ENCODE measurements at regions of chr16 and their contacts with region 1.

Region 1: DNA sequence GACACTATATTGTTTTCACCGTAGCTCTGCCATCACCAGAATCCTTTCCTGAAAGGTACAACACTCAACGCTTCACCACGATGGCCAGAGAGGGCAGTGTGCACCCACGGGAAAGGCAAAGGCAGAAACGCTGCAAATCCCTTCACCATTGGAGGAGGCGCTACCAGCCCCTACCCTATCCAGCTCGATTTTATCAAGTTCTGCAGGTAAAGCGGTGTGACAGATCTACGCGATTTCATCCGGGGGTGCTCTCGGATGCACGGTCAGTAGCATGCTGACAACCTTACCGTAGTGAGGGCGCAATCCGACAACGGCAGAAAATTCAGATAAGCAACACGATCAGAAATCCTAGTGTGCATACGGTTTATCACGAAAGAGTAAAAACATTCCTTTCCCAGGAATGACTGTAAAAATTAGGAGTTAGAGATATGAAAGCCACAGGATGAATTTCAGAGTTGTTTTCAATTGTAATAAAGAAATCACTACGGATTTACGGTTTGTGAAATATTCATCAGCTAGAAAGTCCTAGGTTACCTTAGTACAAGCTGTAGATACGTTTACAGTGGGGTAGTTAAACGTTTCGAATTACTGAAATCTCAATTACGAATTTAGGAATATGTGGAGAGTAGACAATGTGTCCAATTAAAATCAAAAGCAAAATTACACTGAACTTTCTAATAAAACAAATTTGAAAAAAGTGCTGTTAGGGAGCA is 1.8 kb downstream of the NETO2 start:
- DNase-seq: peak; percentile 75 to 87
- H3K4me3 ChIP-seq: peak overlapping the region; percentile 51 to 79 (median 70)
- H3K27ac ChIP-seq: no peak overlapping the region
- H3K4me1 ChIP-seq: 0 out of 7 replicates have a peak, but pooled peaks cover 0 to 2% (median 0%) of the 10 kb centered on the region in 4 experiments
- H3K27me3 ChIP-seq: peaks cover 2 to 31% (median 19%) of the 10 kb centered on the region in 4 experiments
- CTCF ChIP-seq: peak; percentile 96 to 99 (median 97)
- EP300 ChIP-seq: no peak
- POLR2A ChIP-seq: no peak
- RAD21 ChIP-seq: peak; percentile 94 to 96

Region 2: DNA sequence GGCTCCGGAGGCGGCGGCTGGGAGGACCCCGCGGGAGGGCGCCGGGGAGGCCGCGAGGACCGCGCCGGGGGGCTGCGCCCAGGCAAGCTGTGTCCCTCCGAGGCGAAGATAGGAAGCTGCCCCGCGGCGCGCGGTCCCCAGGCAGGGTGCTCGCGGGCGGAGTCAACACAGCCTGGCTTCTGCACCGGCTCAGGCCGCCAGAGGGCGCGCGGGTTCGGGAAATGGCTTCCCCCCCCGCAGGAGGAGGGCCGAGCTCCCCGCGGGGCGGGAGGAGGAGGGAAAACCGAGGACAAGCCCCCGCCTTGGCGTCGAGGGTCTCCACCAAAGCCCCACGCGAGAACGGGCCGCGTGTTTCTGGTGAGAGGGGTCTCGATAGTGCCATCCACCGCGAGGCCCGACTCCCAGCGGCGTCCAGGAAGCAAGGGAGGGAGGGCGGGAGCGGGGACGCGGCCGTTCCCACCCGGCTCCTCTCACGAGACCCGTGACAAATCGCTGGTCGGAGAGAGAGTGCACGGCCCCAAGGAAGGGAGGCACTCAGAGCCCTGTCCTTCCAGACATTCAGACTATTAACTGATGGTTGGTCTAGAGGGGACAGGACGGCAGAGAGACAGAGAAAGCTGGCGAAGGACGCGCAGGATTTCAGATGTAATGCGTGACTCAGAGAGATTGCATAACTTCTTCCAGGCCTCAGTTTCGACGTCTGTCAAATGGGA is 104.0 kb before region 1 on chr16:
- CTCF ChIA-PET with region 1: interaction called, 16 read pairs
- POLR2A ChIA-PET with region 1: interaction called, 3 read pairs
- DNase-seq: peak in 1 of 2 experiments; percentile 98
- H3K4me3 ChIP-seq: peak overlapping the region; percentile 47 to 90 (median 67)
- H3K27ac ChIP-seq: no peak overlapping the region
- H3K4me1 ChIP-seq: no peaks in the 10 kb centered on the region
- H3K27me3 ChIP-seq: peaks cover 0 to 14% (median 5%) of the 10 kb centered on the region in 4 experiments; a peak in 4 of 7 replicates
- CTCF ChIP-seq: peak; percentile 83 to 89 (median 84)
- EP300 ChIP-seq: no peak
- POLR2A ChIP-seq: no peak
- RAD21 ChIP-seq: peak; percentile 76 to 85

Region 3: GRCh38 chr16:47110939-47111338 is 31.0 kb before region 1 on chr16:
- CTCF ChIA-PET with region 1: interaction called, 11 read pairs
- POLR2A ChIA-PET with region 1: no interaction called
- DNase-seq: no peak
- H3K4me3 ChIP-seq: no peak overlapping the region
- H3K27ac ChIP-seq: no peak overlapping the region
- H3K4me1 ChIP-seq: no peaks in the 10 kb centered on the region
- H3K27me3 ChIP-seq: no peaks in the 10 kb centered on the region
- CTCF ChIP-seq: peak in 2 of 3 experiments; percentile 32 to 50; a peak in 2 of 4 replicates
- EP300 ChIP-seq: no peak
- POLR2A ChIP-seq: no peak
- RAD21 ChIP-seq: peak; percentile 61 to 67

Region 4: GRCh38 chr16:47162670-47163420 is 20.9 kb after region 1 on chr16:
- CTCF ChIA-PET with region 1: interaction called, 19 read pairs
- POLR2A ChIA-PET with region 1: interaction called, 3 read pairs
- DNase-seq: no peak
- H3K4me3 ChIP-seq: no peak overlapping the region
- H3K27ac ChIP-seq: no peak overlapping the region
- H3K4me1 ChIP-seq: no peaks in the 10 kb centered on the region
- H3K27me3 ChIP-seq: no peaks in the 10 kb centered on the region
- CTCF ChIP-seq: peak in 2 of 3 experiments; percentile 13 to 14; a peak in 2 of 4 replicates
- EP300 ChIP-seq: no peak
- POLR2A ChIP-seq: no peak
- RAD21 ChIP-seq: peak; percentile 34

Region 5: GRCh38 chr16:47211218-47211617 is 69.3 kb after region 1 on chr16:
- CTCF ChIA-PET with region 1: no interaction called
- POLR2A ChIA-PET with region 1: no interaction called
- DNase-seq: no peak
- H3K4me3 ChIP-seq: no peak overlapping the region
- H3K27ac ChIP-seq: no peak overlapping the region
- H3K4me1 ChIP-seq: no peaks in the 10 kb centered on the region
- H3K27me3 ChIP-seq: no peaks in the 10 kb centered on the region
- CTCF ChIP-seq: no peak
- EP300 ChIP-seq: no peak
- POLR2A ChIP-seq: no peak
- RAD21 ChIP-seq: no peak

Region 6: DNA sequence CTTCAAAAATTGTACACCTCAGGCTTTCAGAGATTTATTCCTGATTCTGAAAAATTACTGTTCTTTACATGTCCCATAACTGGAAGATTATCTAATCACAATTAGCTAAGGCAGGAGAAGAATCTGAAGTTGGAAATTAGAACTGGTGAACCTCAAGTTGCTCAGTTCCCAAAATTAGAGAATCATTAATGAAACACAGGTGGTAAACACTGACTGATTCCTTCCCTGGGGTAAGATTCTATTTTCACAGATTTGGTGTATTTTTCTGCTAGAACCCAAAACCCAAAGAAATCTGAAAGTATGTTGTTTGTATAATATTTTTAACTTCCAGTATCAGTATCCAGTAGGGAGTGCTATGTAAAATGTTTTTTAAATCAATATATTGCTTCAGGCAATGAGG is 344.9 kb after region 1 on chr16:
- CTCF ChIA-PET with region 1: no interaction called
- POLR2A ChIA-PET with region 1: no interaction called
- DNase-seq: no peak
- H3K4me3 ChIP-seq: no peak overlapping the region
- H3K27ac ChIP-seq: no peak overlapping the region
- H3K4me1 ChIP-seq: peaks cover 0 to under 1% (median 0%) of the 10 kb centered on the region in 4 experiments; a peak in 1 of 7 replicates
- H3K27me3 ChIP-seq: no peaks in the 10 kb centered on the region
- CTCF ChIP-seq: no peak
- EP300 ChIP-seq: no peak
- POLR2A ChIP-seq: no peak
- RAD21 ChIP-seq: no peak

Region 7: GRCh38 chr16:48117217-48118105 is 975.5 kb after region 1 on chr16:
- CTCF ChIA-PET with region 1: interaction called, 13 read pairs
- POLR2A ChIA-PET with region 1: no interaction called
- DNase-seq: peak; percentile 71 to 97
- H3K4me3 ChIP-seq: no peak overlapping the region
- H3K27ac ChIP-seq: no peak overlapping the region
- H3K4me1 ChIP-seq: no peaks in the 10 kb centered on the region
- H3K27me3 ChIP-seq: no peaks in the 10 kb centered on the region
- CTCF ChIP-seq: peak; percentile 99
- EP300 ChIP-seq: 0 out of 3 replicates have a peak, but pooled peaks of 1 of the 2 experiments have one; percentile 17
- POLR2A ChIP-seq: no peak
- RAD21 ChIP-seq: peak; percentile 81 to 89

Region 8: DNA sequence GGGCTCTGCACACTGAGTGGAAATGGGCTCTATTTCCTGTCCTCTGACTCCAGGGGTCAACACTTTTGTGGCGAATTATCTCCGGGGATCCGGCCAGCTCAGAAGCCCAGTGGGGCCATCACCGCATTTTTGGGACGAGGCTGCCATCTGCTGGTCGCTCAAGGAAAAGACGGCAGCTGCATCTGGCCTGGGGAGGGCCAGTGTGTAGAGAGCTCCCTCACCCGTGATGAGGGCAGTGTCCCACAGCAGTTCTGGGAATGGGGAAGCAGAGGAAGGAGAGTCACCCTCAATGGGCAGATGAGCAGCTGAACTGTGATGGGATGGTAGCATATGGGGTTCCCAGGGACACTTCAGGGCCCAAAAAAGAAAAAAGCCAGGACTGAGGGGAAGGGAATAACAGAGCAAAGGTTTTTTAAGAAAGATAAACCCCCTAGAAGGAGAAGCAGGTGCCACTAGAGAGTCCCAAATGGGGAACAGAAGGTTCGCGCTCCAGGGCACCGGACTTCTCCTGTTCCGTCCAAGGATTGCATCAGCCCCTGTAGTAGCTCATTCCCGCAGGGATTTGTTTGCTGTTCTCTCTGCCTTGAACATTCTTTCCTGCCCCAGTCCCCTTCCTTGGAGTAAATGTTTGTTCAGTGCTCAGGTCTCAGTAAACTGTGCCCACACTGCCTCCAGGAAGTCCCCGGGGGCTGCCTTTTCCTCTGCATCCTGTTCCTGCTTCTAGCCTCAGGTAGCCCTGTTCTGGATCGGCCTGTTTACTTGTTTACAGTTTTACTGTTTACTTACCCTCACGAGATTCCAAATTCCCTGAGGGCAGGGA is 1023.2 kb after region 1 on chr16:
- CTCF ChIA-PET with region 1: interaction called, 16 read pairs
- POLR2A ChIA-PET with region 1: no interaction called
- DNase-seq: peak; percentile 49 to 89
- H3K4me3 ChIP-seq: no peak overlapping the region
- H3K27ac ChIP-seq: no peak overlapping the region
- H3K4me1 ChIP-seq: no peaks in the 10 kb centered on the region
- H3K27me3 ChIP-seq: no peaks in the 10 kb centered on the region
- CTCF ChIP-seq: peak; percentile 81 to 89 (median 86)
- EP300 ChIP-seq: no peak
- POLR2A ChIP-seq: no peak
- RAD21 ChIP-seq: peak; percentile 97 to 98

Measured in H1 (cell line).